Activated CD4-positive, alpha-beta T cell treated with anti-CD3 and anti-CD28 coated beads for 36 hours (primary cell): ENCODE measurements at regions of chr3 and their contacts with region 1.

Region 1: GRCh38 chr3:52278510-52279069 is at the start of gene WDR82:
- DNase-seq: peak; percentile 100
- ATAC-seq: peak; percentile 78
- H3K4me3 Mint-ChIP-seq: peak within 1 kb of the TSS; percentile 99
- H3K27ac Mint-ChIP-seq: peak within 1 kb of the TSS; percentile 99
- H3K4me1 Mint-ChIP-seq: peaks cover 56% of the 10 kb centered on the region
- H3K27me3 Mint-ChIP-seq: no peaks in the 10 kb centered on the region
- total RNA-seq, gene WDR82: 95.2 to 113 TPM

Region 2: GRCh38 chr3:51622868-51623267 is 655.7 kb before region 1 on chr3:
- CTCF ChIA-PET with region 1: no interaction called
- POLR2A ChIA-PET with region 1: no interaction called
- intact Hi-C with region 1: no loop called
- DNase-seq: no peak
- ATAC-seq: no peak
- H3K4me3 Mint-ChIP-seq: no peak overlapping the region
- H3K27ac Mint-ChIP-seq: no peak overlapping the region
- H3K4me1 Mint-ChIP-seq: peaks cover 17% of the 10 kb centered on the region
- H3K27me3 Mint-ChIP-seq: no peaks in the 10 kb centered on the region

Region 3: GRCh38 chr3:51995346-51996163 is 283.0 kb before region 1 on chr3 and contains the start of gene RPL29:
- CTCF ChIA-PET with region 1: interaction called, 3 read pairs
- POLR2A ChIA-PET with region 1: no interaction called
- intact Hi-C with region 1: loop called (anchors 1 to 10 kb)
- DNase-seq: peak; percentile 96
- ATAC-seq: peak; percentile 95
- H3K4me3 Mint-ChIP-seq: peak within 1 kb of the TSS; percentile 100
- H3K27ac Mint-ChIP-seq: peak within 1 kb of the TSS; percentile 100
- H3K4me1 Mint-ChIP-seq: peaks cover 26% of the 10 kb centered on the region
- H3K27me3 Mint-ChIP-seq: no peaks in the 10 kb centered on the region
- total RNA-seq, gene RPL29: 1,975 to 2,071 TPM

Region 4: DNA sequence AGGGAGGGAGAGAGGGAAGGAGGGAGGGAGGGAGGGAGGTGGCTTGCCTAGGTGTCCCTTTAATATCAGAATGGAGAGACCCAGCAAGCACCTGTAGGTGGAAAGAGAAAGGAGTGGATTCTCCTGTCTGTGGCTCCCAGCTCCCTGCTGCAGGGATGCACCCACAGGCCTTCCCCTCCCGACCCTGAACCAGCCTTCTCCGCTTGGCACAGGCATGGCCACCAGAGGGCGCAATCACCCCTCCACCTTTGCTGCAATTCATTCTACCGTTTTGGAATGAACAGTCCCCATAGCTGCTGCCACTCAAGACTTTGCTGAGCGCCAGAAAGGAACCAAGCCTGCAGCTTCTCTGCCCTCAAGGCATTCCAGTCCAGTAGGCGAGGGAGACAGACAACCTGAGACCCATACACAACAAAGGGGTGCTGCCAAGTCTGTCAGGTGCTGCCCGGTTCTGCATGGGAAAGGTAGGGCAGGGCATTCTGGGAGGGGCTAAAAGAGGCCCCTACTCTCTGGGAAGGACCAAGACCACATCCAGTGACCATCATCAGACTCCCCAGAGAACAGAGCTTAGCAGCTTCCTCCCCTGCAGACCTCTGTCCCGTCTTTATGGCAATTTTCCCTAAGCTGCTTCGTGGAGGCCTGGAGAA is 58.1 kb before region 1 on chr3:
- CTCF ChIA-PET with region 1: interaction called, 59 read pairs
- POLR2A ChIA-PET with region 1: interaction called, 4 read pairs
- intact Hi-C with region 1: loop called in 1 of 2 experiments (anchors 1 kb)
- DNase-seq: peak; percentile 95
- ATAC-seq: peak; percentile 78
- H3K4me3 Mint-ChIP-seq: no peak overlapping the region
- H3K27ac Mint-ChIP-seq: peak overlapping the region; percentile 29
- H3K4me1 Mint-ChIP-seq: peaks cover 83% of the 10 kb centered on the region
- H3K27me3 Mint-ChIP-seq: no peaks in the 10 kb centered on the region

Region 5: GRCh38 chr3:52245322-52246263 is 33.0 kb before region 1 on chr3 and contains the start of gene PPM1M:
- CTCF ChIA-PET with region 1: interaction called, 34 read pairs
- POLR2A ChIA-PET with region 1: interaction called, 15 read pairs
- intact Hi-C with region 1: loop called in 1 of 2 experiments (anchors 1 kb)
- DNase-seq: peak; percentile 73
- ATAC-seq: peak; percentile 24
- H3K4me3 Mint-ChIP-seq: peak within 1 kb of the TSS; percentile 85
- H3K27ac Mint-ChIP-seq: peak within 1 kb of the TSS; percentile 87
- H3K4me1 Mint-ChIP-seq: peaks cover 78% of the 10 kb centered on the region
- H3K27me3 Mint-ChIP-seq: no peaks in the 10 kb centered on the region
- total RNA-seq, gene PPM1M: 52.9 to 59.2 TPM

Region 6: DNA sequence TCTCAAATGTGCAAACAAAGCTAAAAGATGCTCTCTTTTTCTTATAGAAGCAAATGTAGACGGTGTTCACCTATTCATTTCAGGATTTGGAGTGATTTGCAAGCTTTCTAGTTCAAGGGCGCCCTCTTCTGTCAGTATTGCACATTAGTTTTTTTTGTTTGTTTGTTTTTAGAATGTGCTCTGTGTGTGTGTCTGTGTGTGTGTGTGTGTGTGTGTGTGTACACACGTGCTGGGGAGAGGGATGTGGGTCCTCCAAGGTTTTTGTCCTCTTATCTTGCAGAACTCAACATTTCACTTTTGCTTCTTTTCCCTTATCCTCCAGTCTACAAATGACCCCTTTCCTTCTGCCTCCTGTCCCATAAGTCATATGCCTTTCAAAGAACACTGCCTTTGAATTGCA is 61.0 kb after region 1 on chr3:
- CTCF ChIA-PET with region 1: interaction called, 26 read pairs
- POLR2A ChIA-PET with region 1: interaction called, 9 read pairs
- intact Hi-C with region 1: no loop called
- DNase-seq: peak; percentile 59
- ATAC-seq: peak; percentile 74
- H3K4me3 Mint-ChIP-seq: no peak overlapping the region
- H3K27ac Mint-ChIP-seq: peak overlapping the region; percentile 32
- H3K4me1 Mint-ChIP-seq: peaks cover 6% of the 10 kb centered on the region
- H3K27me3 Mint-ChIP-seq: no peaks in the 10 kb centered on the region

Region 7: GRCh38 chr3:52705688-52706686 is 427.4 kb after region 1 on chr3 and contains the starts of genes GLT8D1 and SPCS1:
- CTCF ChIA-PET with region 1: no interaction called
- POLR2A ChIA-PET with region 1: no interaction called
- intact Hi-C with region 1: loop called in 1 of 2 experiments (anchors 5 kb)
- DNase-seq: peak; percentile 92
- ATAC-seq: peak; percentile 94
- H3K4me3 Mint-ChIP-seq: peak within 1 kb of the TSS; percentile 89
- H3K27ac Mint-ChIP-seq: peak within 1 kb of the TSS; percentile 90
- H3K4me1 Mint-ChIP-seq: peaks cover 28% of the 10 kb centered on the region
- H3K27me3 Mint-ChIP-seq: no peaks in the 10 kb centered on the region
- total RNA-seq, gene GLT8D1: 35.2 to 38.0 TPM
- total RNA-seq, gene SPCS1: 111 to 120 TPM